B cell (primary cell): ENCODE measurements at regions of chr17 and their contacts with region 1.

Region 1: DNA sequence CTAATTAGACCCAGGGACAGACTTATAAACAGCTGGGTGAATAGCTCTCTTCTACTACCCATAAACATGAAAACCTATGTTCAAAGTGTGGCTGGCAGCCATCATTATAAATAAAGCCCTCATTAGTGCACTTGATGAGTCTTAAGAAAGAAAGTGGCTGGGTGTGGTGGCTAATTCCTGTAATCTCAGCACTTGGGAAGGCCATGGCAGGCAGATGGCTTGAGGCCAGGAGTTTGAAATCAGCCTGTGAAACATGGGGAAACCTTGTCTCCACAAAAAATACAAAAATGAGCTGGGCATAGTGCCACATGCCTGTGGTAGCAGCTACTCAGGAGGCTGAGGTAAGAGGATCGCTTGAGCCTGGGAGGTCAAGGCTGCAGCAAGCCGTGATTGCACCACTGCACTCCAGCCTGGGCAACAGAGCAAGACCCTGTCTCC is 28.3 kb upstream of the APPBP2 start:
- DNase-seq: no peak
- ATAC-seq: no peak
- H3K4me3 ChIP-seq: no peak overlapping the region
- H3K4me3 Mint-ChIP-seq: no peak overlapping the region
- H3K27ac ChIP-seq: no peak overlapping the region
- H3K27ac Mint-ChIP-seq: no peak overlapping the region
- H3K4me1 ChIP-seq: no peaks in the 10 kb centered on the region
- H3K4me1 Mint-ChIP-seq: no peaks in the 10 kb centered on the region
- H3K27me3 ChIP-seq: no peaks in the 10 kb centered on the region
- H3K27me3 Mint-ChIP-seq: no peaks in the 10 kb centered on the region
- CTCF ChIP-seq: no peak

Region 2: DNA sequence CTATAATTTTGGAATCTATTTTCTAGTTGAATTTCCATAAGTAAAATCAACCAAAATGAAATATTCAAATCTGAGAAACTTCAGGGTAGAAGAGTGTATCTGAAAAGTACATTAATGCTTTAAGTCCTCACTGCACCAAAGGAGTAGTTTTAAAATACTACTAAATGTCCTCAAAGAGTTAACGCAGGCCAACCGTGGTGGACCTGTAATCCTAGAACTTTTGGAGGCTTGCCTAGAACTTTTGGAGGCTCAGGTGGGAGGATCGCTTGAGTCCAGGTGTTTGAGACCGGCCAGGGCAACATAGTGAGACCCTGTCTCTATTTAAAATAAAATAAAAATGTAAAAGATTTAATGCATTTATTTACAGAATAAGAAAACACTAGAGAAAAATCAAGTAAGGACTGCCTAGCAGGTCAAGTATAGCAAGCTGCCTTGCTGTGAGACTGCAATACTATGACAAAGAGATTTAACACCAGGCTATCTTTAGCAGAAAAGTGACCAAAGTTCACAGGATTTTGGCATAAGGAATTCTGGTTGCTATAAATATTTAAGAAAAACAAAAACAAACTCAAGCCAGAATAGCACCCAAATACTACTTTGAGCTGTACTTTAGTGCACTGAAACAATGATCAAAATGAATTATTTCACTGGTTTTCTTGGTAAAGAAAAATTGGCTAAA is 91.1 kb before region 1 on chr17:
- CTCF ChIA-PET with region 1: no interaction called
- POLR2A ChIA-PET with region 1: interaction called, 10 read pairs
- intact Hi-C with region 1: no loop called
- DNase-seq: no peak
- ATAC-seq: no peak
- H3K4me3 ChIP-seq: no peak overlapping the region
- H3K4me3 Mint-ChIP-seq: no peak overlapping the region
- H3K27ac ChIP-seq: no peak overlapping the region
- H3K27ac Mint-ChIP-seq: no peak overlapping the region
- H3K4me1 ChIP-seq: no peaks in the 10 kb centered on the region
- H3K4me1 Mint-ChIP-seq: no peaks in the 10 kb centered on the region
- H3K27me3 ChIP-seq: no peaks in the 10 kb centered on the region
- H3K27me3 Mint-ChIP-seq: no peaks in the 10 kb centered on the region
- CTCF ChIP-seq: no peak